ENCODE measurements at regions of chr15 and their contacts with region 1.

Region 1: DNA sequence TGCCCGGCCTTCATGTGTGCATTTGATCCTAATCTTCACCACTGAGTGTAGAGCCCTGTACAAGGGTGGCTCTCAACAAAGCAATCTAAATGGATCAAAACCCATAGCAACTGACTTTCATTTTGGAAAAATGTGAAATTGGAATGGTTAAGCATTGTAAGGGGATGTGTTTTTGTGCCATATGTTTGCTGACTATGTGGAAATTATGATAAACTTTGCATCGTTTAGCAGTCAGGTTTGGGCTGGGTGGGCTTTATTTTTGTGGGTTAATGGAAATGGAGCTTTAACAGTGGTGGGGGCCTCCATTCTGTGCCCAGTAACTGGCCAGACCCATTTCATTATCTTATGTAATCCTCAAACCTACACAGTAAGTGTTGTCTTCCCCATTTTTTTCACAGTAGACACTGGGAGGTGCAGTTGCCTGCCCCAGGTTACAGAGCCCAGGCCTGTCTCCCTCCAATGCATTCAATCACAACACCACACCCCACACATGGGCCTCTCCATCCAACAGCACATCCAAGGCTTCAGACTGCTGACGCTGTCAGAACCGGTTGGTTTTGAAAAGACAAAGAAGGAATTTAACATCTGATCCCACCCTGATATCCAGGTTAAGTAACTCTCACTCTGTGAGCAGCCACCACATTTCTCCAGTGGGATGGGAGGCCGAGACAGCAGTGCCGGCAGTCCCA is 136.3 kb upstream of the ABHD17C start:
- DNase-seq: no peak
- ATAC-seq: no peak
- H3K4me3 ChIP-seq: no peak overlapping the region
- H3K27ac ChIP-seq: no peak overlapping the region
- H3K4me1 ChIP-seq: peaks cover 5% of the 10 kb centered on the region
- H3K27me3 ChIP-seq: no peaks in the 10 kb centered on the region
- CTCF ChIP-seq: no peak
- POLR2A ChIP-seq: no peak
- RAD21 ChIP-seq: no peak

Region 2: GRCh38 chr15:80533790-80534333 is 24.9 kb before region 1 on chr15:
- CTCF ChIA-PET with region 1: no interaction called
- POLR2A ChIA-PET with region 1: interaction called, 14 read pairs
- dilution Hi-C with region 1: no loop called
- in situ Hi-C with region 1: no loop called
- intact Hi-C with region 1: no loop called
- DNase-seq: no peak
- ATAC-seq: no peak
- H3K4me3 ChIP-seq: no peak overlapping the region
- H3K27ac ChIP-seq: no peak overlapping the region
- H3K4me1 ChIP-seq: peaks cover 14% of the 10 kb centered on the region
- H3K27me3 ChIP-seq: no peaks in the 10 kb centered on the region
- CTCF ChIP-seq: no peak
- POLR2A ChIP-seq: no peak
- RAD21 ChIP-seq: no peak

Region 3: GRCh38 chr15:80599359-80599758 is 40.6 kb after region 1 on chr15:
- CTCF ChIA-PET with region 1: no interaction called
- POLR2A ChIA-PET with region 1: no interaction called
- dilution Hi-C with region 1: no loop called
- in situ Hi-C with region 1: no loop called
- intact Hi-C with region 1: no loop called
- DNase-seq: peak; percentile 86
- ATAC-seq: peak; percentile 50; the same call in 1 of the 2 replicates
- H3K4me3 ChIP-seq: no peak overlapping the region
- H3K27ac ChIP-seq: no peak overlapping the region; the same call in 1 of the 2 replicates
- H3K4me1 ChIP-seq: peaks cover 16% of the 10 kb centered on the region
- H3K27me3 ChIP-seq: no peaks in the 10 kb centered on the region
- CTCF ChIP-seq: no peak
- POLR2A ChIP-seq: no peak
- RAD21 ChIP-seq: no peak

Region 4: GRCh38 chr15:80699981-80700380 is 141.2 kb after region 1 on chr15:
- CTCF ChIA-PET with region 1: no interaction called
- POLR2A ChIA-PET with region 1: no interaction called
- dilution Hi-C with region 1: no loop called
- in situ Hi-C with region 1: no loop called
- intact Hi-C with region 1: no loop called
- DNase-seq: peak; percentile 76
- ATAC-seq: peak; percentile 28
- H3K4me3 ChIP-seq: no peak overlapping the region
- H3K27ac ChIP-seq: no peak overlapping the region
- H3K4me1 ChIP-seq: peaks cover 23% of the 10 kb centered on the region
- H3K27me3 ChIP-seq: no peaks in the 10 kb centered on the region
- CTCF ChIP-seq: no peak
- POLR2A ChIP-seq: no peak
- RAD21 ChIP-seq: no peak

Region 5: GRCh38 chr15:80893777-80894176 is 335.0 kb after region 1 on chr15:
- CTCF ChIA-PET with region 1: no interaction called
- POLR2A ChIA-PET with region 1: no interaction called
- dilution Hi-C with region 1: no loop called
- in situ Hi-C with region 1: no loop called
- intact Hi-C with region 1: no loop called
- DNase-seq: no peak
- ATAC-seq: no peak
- H3K4me3 ChIP-seq: no peak overlapping the region
- H3K27ac ChIP-seq: no peak overlapping the region
- H3K4me1 ChIP-seq: peaks cover 4% of the 10 kb centered on the region
- H3K27me3 ChIP-seq: no peaks in the 10 kb centered on the region
- CTCF ChIP-seq: no peak
- POLR2A ChIP-seq: no peak
- RAD21 ChIP-seq: no peak

Measured in IMR-90 (cell line).